ENCODE measurements at regions of chr5 and their contacts with region 1.

Region 1: GRCh38 chr5:132180134-132180745 is 47.4 kb downstream of the P4HA2 start:
- DNase-seq: peak in 4 of 5 donors; percentile 9 to 15 (median 12)
- H3K4me3 ChIP-seq: no peak overlapping the region
- H3K4me3 Mint-ChIP-seq: peak overlapping the region in 1 of 8 donors; percentile 50
- H3K27ac ChIP-seq: no peak overlapping the region
- H3K27ac Mint-ChIP-seq: no peak overlapping the region
- H3K4me1 ChIP-seq: peaks cover 11% of the 10 kb centered on the region
- H3K4me1 Mint-ChIP-seq: peaks cover 18 to 30% (median 24%) of the 10 kb centered on the region in 4 donors
- H3K27me3 ChIP-seq: no peaks in the 10 kb centered on the region
- H3K27me3 Mint-ChIP-seq: no peaks in the 10 kb centered on the region

Region 2: GRCh38 chr5:132190161-132190817 is 10.0 kb after region 1 on chr5:
- CTCF ChIA-PET with region 1: interaction called, 27 read pairs
- POLR2A ChIA-PET with region 1: no interaction called
- intact Hi-C with region 1: no loop called
- DNase-seq: peak; percentile 37 to 54 (median 46)
- H3K4me3 ChIP-seq: no peak overlapping the region
- H3K4me3 Mint-ChIP-seq: no peak overlapping the region
- H3K27ac ChIP-seq: no peak overlapping the region
- H3K27ac Mint-ChIP-seq: peak overlapping the region in 1 of 7 donors; percentile 4
- H3K4me1 ChIP-seq: no peaks in the 10 kb centered on the region
- H3K4me1 Mint-ChIP-seq: peaks cover 0 to 4% (median 1%) of the 10 kb centered on the region in 4 donors
- H3K27me3 ChIP-seq: no peaks in the 10 kb centered on the region
- H3K27me3 Mint-ChIP-seq: peaks cover 3 to 7% of the 10 kb centered on the region in 2 donors

Region 3: DNA sequence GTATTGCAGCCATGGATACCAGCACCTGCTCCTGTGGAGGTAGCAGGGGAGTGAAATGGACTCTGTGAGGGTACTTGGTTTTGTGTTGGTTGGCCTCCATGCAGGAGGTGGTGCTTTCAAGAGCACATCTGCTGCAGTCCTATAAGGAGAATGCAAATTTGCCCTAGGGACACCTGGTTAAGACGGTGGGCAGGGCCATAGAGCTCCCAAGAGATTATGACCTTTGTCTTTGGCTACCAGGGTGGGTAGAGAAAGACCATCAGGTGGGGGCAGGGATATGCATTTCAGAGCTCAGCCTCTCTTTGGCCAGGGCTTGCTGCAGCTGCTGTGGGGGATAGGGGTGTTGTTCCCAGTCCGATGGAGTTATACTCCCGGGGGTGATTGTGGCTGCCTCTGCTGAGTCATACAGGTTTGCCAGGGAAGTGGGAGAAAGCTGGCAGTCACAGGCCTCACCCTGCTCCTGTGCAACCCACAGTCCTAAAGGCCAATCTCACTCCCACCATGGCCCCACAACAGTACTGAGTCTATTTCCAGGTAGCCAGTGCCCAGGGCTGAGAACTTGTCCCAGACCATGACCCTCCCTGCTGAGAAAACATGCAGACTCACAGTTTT is 63.2 kb after region 1 on chr5:
- CTCF ChIA-PET with region 1: no interaction called
- POLR2A ChIA-PET with region 1: no interaction called
- intact Hi-C with region 1: loop called (anchors 2 kb)
- DNase-seq: no peak
- H3K4me3 ChIP-seq: no peak overlapping the region
- H3K4me3 Mint-ChIP-seq: no peak overlapping the region
- H3K27ac ChIP-seq: no peak overlapping the region
- H3K27ac Mint-ChIP-seq: peak overlapping the region in 1 of 7 donors; percentile 57
- H3K4me1 ChIP-seq: no peaks in the 10 kb centered on the region
- H3K4me1 Mint-ChIP-seq: peaks cover 0 to 5% (median under 1%) of the 10 kb centered on the region in 4 donors
- H3K27me3 ChIP-seq: no peaks in the 10 kb centered on the region
- H3K27me3 Mint-ChIP-seq: peaks cover 10 to 13% of the 10 kb centered on the region in 2 donors